ENCODE measurements at regions of chr4 and their contacts with region 1.

Region 1: GRCh38 chr4:2814627-2815270 is 21.9 kb downstream of the SH3BP2 start:
- DNase-seq: no peak
- H3K4me3 Mint-ChIP-seq: no peak overlapping the region
- H3K27ac Mint-ChIP-seq: peak overlapping the region; percentile 25
- H3K4me1 Mint-ChIP-seq: peaks cover 72% of the 10 kb centered on the region
- H3K27me3 Mint-ChIP-seq: no peaks in the 10 kb centered on the region

Region 2: DNA sequence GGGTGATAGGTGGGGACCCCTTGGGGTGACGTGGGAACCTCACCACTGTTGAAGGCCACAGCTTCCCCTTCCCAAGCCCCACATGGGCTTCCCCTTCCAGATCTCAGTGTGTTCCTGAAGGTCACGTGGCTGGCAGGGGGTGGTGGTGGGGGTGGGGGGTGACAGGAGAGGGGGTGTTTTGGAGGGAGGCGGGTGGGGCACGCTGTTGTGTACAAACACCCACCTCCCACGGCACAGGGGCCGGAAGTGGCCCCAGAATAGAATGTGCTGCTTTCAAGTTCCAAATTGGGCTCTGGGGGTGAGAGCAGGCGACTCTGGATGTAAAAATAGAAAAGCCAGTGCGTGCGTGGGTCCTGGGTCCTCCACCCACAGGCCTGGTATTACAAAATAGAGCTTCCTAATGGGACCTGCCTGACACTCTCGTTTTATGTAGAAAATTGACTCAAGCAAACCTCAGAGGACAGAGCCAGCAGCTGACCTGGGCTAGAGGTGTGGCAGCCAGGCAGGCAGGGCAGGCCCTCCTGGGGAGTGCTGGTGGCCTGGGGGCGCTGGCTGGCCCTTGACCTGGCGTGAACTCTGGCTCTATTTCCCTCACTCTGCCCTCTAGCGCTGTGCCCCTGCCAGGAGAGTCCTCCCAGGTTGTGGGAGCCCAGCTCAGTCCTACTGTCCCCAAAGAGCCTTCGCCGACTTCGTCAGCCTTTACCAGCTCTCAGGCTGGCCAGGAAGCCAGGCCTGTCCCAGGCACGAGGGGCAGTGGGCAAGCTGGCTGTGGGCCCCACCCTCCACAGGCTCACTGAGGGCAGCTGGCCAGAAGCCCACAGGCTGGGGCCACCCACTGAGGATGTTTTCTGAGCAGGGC is 27.3 kb before region 1 on chr4:
- CTCF ChIA-PET with region 1: no interaction called
- POLR2A ChIA-PET with region 1: no interaction called
- DNase-seq: peak; percentile 59
- H3K4me3 Mint-ChIP-seq: no peak overlapping the region
- H3K27ac Mint-ChIP-seq: peak overlapping the region; percentile 85
- H3K4me1 Mint-ChIP-seq: peaks cover 32% of the 10 kb centered on the region
- H3K27me3 Mint-ChIP-seq: peaks cover 6% of the 10 kb centered on the region

Region 3: GRCh38 chr4:2798399-2799223 is 16.1 kb before region 1 on chr4:
- CTCF ChIA-PET with region 1: interaction called, 15 read pairs
- POLR2A ChIA-PET with region 1: no interaction called
- DNase-seq: peak; percentile 59
- H3K4me3 Mint-ChIP-seq: peak overlapping the region; percentile 77
- H3K27ac Mint-ChIP-seq: peak overlapping the region; percentile 91
- H3K4me1 Mint-ChIP-seq: peaks cover 65% of the 10 kb centered on the region
- H3K27me3 Mint-ChIP-seq: no peaks in the 10 kb centered on the region

Region 4: GRCh38 chr4:2977211-2978088 is 162.7 kb after region 1 on chr4:
- CTCF ChIA-PET with region 1: no interaction called
- POLR2A ChIA-PET with region 1: no interaction called
- DNase-seq: no peak
- H3K4me3 Mint-ChIP-seq: no peak overlapping the region
- H3K27ac Mint-ChIP-seq: no peak overlapping the region
- H3K4me1 Mint-ChIP-seq: no peaks in the 10 kb centered on the region
- H3K27me3 Mint-ChIP-seq: no peaks in the 10 kb centered on the region

Measured in activated CD4-positive, alpha-beta T cell treated with anti-CD3 and anti-CD28 coated beads, Interleukin-2, amount 10 ng/mL, durations not matched to agents 7 days and 5 days (primary cell).